SK-N-SH (cell line): ENCODE measurements at regions of chr5 and their contacts with region 1.

Region 1: DNA sequence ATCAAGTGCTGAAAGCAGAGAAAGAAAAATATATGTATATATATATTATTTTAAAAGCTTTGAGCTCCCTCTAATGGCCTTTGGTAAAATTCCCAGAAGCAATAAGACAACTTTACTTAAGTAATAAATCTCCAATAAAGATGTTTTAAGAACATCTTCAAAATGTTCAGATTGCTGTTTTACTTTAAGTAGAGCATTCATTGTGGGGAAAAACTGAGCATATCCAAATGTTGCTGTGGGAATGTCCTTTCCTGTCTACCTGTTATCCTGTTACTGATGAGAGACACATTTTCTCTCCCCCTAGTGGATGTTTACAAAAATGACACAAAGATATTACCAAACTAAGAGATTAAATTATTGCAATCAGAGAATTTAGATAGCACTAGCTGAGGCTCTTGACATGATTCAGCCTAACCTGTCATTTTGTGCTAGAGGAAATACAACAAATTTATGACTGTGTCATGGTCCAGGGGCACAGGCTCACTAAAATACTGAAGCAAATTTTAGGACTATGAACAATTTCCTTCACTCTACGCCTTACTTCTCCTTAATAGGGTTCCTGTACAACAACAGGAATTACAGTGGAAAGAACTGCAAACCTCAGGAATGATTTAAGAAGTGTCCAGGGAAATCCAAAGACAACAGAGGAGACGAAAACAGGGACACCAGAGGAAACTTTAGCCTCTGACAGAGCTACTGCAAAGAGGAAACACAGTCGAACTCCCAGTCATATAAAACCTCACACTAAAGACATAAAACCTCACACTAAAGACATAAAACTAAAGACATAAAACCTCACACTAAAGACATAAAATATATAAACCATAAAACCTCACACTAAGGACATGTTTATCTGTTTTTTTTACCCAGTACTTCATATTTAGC is 24.3 kb upstream of the PRRC1 start:
- DNase-seq: peak; percentile 42
- H3K4me3 ChIP-seq: no peak overlapping the region; a peak in 1 of 4 replicates
- H3K27ac ChIP-seq: no peak overlapping the region
- H3K4me1 ChIP-seq: no peaks in the 10 kb centered on the region
- H3K27me3 ChIP-seq: peaks cover 5% of the 10 kb centered on the region; the same call in 1 of the 2 replicates
- CTCF ChIP-seq: peak; percentile 99
- EP300 ChIP-seq: no peak
- RAD21 ChIP-seq: peak; percentile 49

Region 2: GRCh38 chr5:127072861-127073846 is 419.9 kb before region 1 on chr5 and contains the start of gene C5orf63:
- CTCF ChIA-PET with region 1: no interaction called
- POLR2A ChIA-PET with region 1: no interaction called
- DNase-seq: peak; percentile 86
- H3K4me3 ChIP-seq: peak within 1 kb of the TSS; percentile 54 to 67
- H3K27ac ChIP-seq: peak within 1 kb of the TSS in 1 of 2 experiments; percentile 64; a peak in 2 of 4 replicates
- H3K4me1 ChIP-seq: peaks cover 3 to 7% of the 10 kb centered on the region in 2 experiments; a peak in 2 of 4 replicates
- H3K27me3 ChIP-seq: no peaks in the 10 kb centered on the region
- CTCF ChIP-seq: no peak
- EP300 ChIP-seq: peak; percentile 12 to 14; a peak in 2 of 4 replicates
- RAD21 ChIP-seq: no peak
- polyA plus RNA-seq, gene C5orf63: 3.6 and 4.9 TPM in 2 replicates

Region 3: GRCh38 chr5:127290019-127290945 is 202.8 kb before region 1 on chr5 and contains the start of gene MEGF10:
- CTCF ChIA-PET with region 1: interaction called, 39 read pairs
- POLR2A ChIA-PET with region 1: no interaction called
- DNase-seq: peak; percentile 83
- H3K4me3 ChIP-seq: peak within 1 kb of the TSS; percentile 47 to 63
- H3K27ac ChIP-seq: no peak within 1 kb of the TSS
- H3K4me1 ChIP-seq: peaks cover 0 to 8% of the 10 kb centered on the region in 2 experiments; a peak in 1 of 4 replicates
- H3K27me3 ChIP-seq: no peaks in the 10 kb centered on the region
- CTCF ChIP-seq: peak; percentile 87
- EP300 ChIP-seq: no peak
- RAD21 ChIP-seq: peak; percentile 92
- polyA plus RNA-seq, gene MEGF10: 0.67 and 1.1 TPM in 2 replicates

Region 4: GRCh38 chr5:127435821-127436220 is 57.3 kb before region 1 on chr5:
- CTCF ChIA-PET with region 1: interaction called, 13 read pairs
- POLR2A ChIA-PET with region 1: no interaction called
- DNase-seq: no peak
- H3K4me3 ChIP-seq: no peak overlapping the region
- H3K27ac ChIP-seq: no peak overlapping the region
- H3K4me1 ChIP-seq: no peaks in the 10 kb centered on the region; a peak in 1 of 4 replicates
- H3K27me3 ChIP-seq: no peaks in the 10 kb centered on the region
- CTCF ChIP-seq: no peak
- EP300 ChIP-seq: no peak
- RAD21 ChIP-seq: no peak

Region 5: DNA sequence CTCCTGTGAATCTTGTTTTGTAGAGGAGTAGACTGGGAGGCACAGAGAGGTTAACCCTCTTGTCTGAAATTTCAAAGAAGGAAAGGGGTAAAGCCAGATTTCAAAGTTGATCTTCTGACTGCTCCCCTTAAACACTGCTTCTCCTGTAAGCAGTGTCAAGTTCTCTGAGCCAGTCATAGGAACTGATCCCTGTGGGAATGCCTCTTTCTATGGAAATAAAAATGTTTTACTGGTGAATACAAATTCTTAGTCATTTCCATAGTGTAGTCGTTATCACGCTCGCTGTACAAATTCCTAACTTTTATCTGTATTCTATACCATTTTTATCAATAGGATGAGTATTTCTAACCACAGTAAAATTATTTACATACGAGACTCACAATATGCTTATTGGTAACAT is 42.0 kb before region 1 on chr5:
- CTCF ChIA-PET with region 1: interaction called, 18 read pairs
- POLR2A ChIA-PET with region 1: no interaction called
- DNase-seq: no peak
- H3K4me3 ChIP-seq: no peak overlapping the region
- H3K27ac ChIP-seq: no peak overlapping the region
- H3K4me1 ChIP-seq: peaks cover 0 to 7% of the 10 kb centered on the region in 2 experiments; a peak in 2 of 4 replicates
- H3K27me3 ChIP-seq: no peaks in the 10 kb centered on the region
- CTCF ChIP-seq: no peak
- EP300 ChIP-seq: no peak
- RAD21 ChIP-seq: no peak

Region 6: DNA sequence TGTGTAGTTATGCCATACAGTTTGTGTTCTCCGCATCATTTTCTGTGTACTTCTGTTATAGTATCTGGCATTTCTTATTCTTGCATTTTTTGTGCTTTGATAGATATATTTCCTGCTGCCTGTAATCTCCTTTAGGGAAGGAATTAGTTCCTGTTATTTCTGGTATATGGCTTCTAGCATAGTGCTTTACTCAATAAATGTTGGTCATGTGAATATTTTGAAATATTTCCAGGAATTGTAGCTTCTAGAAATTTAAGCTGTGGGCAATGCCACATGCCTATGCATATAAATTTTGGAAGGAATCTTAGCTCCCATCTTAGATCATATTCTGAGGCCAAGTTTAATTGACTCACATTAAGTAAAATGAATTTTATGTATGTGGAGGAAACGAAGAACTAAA is 12.8 kb after region 1 on chr5:
- CTCF ChIA-PET with region 1: interaction called, 46 read pairs
- POLR2A ChIA-PET with region 1: no interaction called
- DNase-seq: no peak
- H3K4me3 ChIP-seq: no peak overlapping the region
- H3K27ac ChIP-seq: no peak overlapping the region
- H3K4me1 ChIP-seq: no peaks in the 10 kb centered on the region
- H3K27me3 ChIP-seq: no peaks in the 10 kb centered on the region; the same call in 1 of the 2 replicates
- CTCF ChIP-seq: no peak
- EP300 ChIP-seq: no peak
- RAD21 ChIP-seq: no peak

Region 7: GRCh38 chr5:127975935-127976334 is 482.8 kb after region 1 on chr5:
- CTCF ChIA-PET with region 1: no interaction called
- POLR2A ChIA-PET with region 1: no interaction called
- DNase-seq: no peak
- H3K4me3 ChIP-seq: no peak overlapping the region
- H3K27ac ChIP-seq: no peak overlapping the region
- H3K4me1 ChIP-seq: no peaks in the 10 kb centered on the region
- H3K27me3 ChIP-seq: no peaks in the 10 kb centered on the region
- CTCF ChIP-seq: 0 out of 2 replicates have a peak, but pooled peaks have one; percentile 7
- EP300 ChIP-seq: no peak
- RAD21 ChIP-seq: no peak